Transverse colon (tissue), 4 donors: ENCODE measurements at regions of chrX and their contacts with region 1.

Region 1: DNA sequence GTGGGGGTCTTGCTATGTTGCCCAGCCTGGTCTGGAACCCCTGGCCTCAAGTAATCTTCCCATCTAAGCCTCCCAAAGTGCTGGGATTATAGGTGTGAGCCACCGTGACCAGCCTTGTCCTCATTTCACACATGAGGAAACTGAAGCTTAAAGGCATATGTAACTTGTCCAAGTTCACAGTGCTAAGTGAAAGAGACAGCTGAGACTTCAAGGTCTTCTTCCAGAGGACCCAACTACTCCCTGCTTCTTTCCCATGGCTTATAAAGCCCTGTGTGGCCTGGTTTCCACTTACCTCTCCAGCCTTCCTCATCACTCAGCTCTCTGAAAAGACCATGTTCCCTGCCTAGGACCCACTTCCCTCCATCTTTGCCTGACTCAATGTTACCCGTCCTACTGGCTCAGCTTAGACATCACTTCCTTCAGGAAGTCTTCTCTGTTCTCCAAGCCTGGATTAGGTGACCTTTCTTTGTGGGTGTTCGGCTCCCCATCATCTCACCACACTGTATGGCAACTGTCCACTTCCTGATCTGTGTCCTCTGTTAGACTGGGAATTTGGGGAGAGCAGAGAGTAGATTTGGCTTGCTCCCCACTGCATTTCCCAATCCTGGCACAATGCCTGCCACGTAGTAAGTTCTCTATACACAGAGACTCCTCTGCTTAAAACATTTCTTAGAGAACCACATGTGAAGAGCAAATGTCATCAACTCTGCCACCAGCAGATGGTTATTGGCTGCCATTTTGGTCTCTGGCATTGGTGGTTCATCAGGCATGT is 30.4 kb upstream of the LAMP2 start:
- DNase-seq: no peak
- H3K4me3 ChIP-seq: no peak overlapping the region
- H3K27ac ChIP-seq: no peak overlapping the region
- H3K4me1 ChIP-seq: no peaks in the 10 kb centered on the region
- H3K27me3 ChIP-seq: no peaks in the 10 kb centered on the region
- CTCF ChIP-seq: no peak
- EP300 ChIP-seq: no peak
- POLR2A ChIP-seq: no peak

Region 2: DNA sequence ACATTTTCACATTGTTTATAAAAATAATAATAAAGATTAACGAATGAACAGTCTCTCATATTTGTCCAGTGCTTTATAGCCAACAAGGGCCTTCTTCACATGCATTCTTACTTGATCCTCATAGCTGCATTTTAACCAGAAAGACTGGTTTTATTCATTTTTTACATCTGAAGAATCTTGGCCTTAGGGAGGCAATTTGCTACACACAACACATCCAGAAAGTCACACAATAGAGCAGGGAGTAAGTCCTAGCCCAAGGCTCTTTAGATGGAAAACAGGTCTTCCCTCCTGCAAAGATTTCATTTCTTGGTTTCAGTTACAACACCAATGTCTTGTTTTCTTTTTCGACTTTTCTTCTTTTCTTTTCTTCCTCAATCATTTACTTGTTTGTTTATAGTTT is 143.4 kb after region 1 on chrX:
- in situ Hi-C with region 1: no loop called
- intact Hi-C with region 1: no loop called
- DNase-seq: no peak
- H3K4me3 ChIP-seq: no peak overlapping the region
- H3K27ac ChIP-seq: no peak overlapping the region
- H3K4me1 ChIP-seq: no peaks in the 10 kb centered on the region
- H3K27me3 ChIP-seq: no peaks in the 10 kb centered on the region
- CTCF ChIP-seq: no peak
- EP300 ChIP-seq: no peak
- POLR2A ChIP-seq: no peak

Region 3: GRCh38 chrX:120664081-120664480 is 164.6 kb after region 1 on chrX:
- in situ Hi-C with region 1: loop called in 3 of 4 experiments (anchors 10 to 25 kb)
- intact Hi-C with region 1: no loop called
- DNase-seq: no peak
- H3K4me3 ChIP-seq: no peak overlapping the region
- H3K27ac ChIP-seq: no peak overlapping the region
- H3K4me1 ChIP-seq: no peaks in the 10 kb centered on the region
- H3K27me3 ChIP-seq: no peaks in the 10 kb centered on the region
- CTCF ChIP-seq: peak; percentile 10 to 39 (median 25)
- EP300 ChIP-seq: no peak
- POLR2A ChIP-seq: no peak